Activated CD8-positive, alpha-beta T cell treated with anti-CD3 and anti-CD28 coated beads for 36 hours (primary cell): ENCODE measurements at regions of chr12 and their contacts with region 1.

Region 1: GRCh38 chr12:1939801-1940607 is 21.6 kb upstream of the CACNA2D4 start:
- DNase-seq: peak; percentile 92
- ATAC-seq: peak; percentile 96
- H3K4me3 Mint-ChIP-seq: no peak overlapping the region
- H3K27ac Mint-ChIP-seq: no peak overlapping the region
- H3K4me1 Mint-ChIP-seq: peaks cover 4% of the 10 kb centered on the region
- H3K27me3 Mint-ChIP-seq: no peaks in the 10 kb centered on the region
- CTCF ChIP-seq: peak; percentile 91

Region 2: GRCh38 chr12:1634590-1635191 is 305.3 kb before region 1 on chr12:
- CTCF ChIA-PET with region 1: interaction called, 34 read pairs
- POLR2A ChIA-PET with region 1: interaction called, 4 read pairs
- intact Hi-C with region 1: loop called (anchors 5 kb)
- DNase-seq: peak; percentile 72
- ATAC-seq: peak; percentile 75
- H3K4me3 Mint-ChIP-seq: no peak overlapping the region
- H3K27ac Mint-ChIP-seq: no peak overlapping the region
- H3K4me1 Mint-ChIP-seq: peaks cover 10% of the 10 kb centered on the region
- H3K27me3 Mint-ChIP-seq: peaks cover 43% of the 10 kb centered on the region
- CTCF ChIP-seq: peak; percentile 81

Region 3: DNA sequence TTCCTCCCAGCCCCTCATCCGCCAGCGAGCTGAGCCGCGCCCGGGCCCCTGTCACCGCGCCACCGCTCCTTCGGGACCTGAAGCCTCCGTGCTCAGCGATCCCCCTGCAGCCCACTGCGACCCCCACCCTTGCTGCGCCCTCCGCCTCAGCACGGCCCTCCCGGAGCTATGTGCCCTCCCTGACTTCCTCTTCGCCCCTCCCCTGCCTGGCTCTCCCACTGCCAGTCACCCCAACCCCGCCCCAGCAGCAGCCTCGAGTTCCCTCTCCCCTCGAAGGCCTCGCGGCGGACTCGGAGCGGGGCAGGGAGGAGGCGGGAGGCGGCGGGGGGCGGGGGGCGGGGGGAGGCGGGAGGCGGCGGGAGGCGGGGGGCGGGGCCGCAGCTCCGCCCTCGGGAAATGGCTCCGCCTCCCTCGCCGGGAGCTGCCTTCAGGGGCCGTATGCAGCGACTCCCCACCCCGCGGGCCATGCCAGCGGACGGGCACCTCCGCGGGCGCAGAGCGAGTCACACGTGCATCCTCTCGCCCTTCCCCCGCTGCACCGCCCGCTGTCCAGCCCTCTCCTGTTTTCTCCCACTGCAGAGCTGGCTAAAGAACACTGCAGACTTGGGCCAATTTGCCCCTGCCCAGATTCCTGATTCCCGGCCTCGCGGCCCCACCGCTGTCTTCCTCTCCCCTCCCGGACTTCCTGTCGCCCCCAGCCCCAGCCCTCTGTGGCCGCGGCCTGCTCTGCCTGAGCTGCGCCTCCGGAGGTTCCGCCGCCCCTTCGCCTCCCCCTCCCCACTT is 278.3 kb before region 1 on chr12:
- CTCF ChIA-PET with region 1: interaction called, 53 read pairs
- POLR2A ChIA-PET with region 1: no interaction called
- intact Hi-C with region 1: loop called (anchors 5 kb)
- DNase-seq: peak; percentile 91
- ATAC-seq: peak; percentile 93
- H3K4me3 Mint-ChIP-seq: peak overlapping the region; percentile 73
- H3K27ac Mint-ChIP-seq: peak overlapping the region; percentile 83
- H3K4me1 Mint-ChIP-seq: peaks cover 36% of the 10 kb centered on the region
- H3K27me3 Mint-ChIP-seq: no peaks in the 10 kb centered on the region
- CTCF ChIP-seq: no peak

Region 4: DNA sequence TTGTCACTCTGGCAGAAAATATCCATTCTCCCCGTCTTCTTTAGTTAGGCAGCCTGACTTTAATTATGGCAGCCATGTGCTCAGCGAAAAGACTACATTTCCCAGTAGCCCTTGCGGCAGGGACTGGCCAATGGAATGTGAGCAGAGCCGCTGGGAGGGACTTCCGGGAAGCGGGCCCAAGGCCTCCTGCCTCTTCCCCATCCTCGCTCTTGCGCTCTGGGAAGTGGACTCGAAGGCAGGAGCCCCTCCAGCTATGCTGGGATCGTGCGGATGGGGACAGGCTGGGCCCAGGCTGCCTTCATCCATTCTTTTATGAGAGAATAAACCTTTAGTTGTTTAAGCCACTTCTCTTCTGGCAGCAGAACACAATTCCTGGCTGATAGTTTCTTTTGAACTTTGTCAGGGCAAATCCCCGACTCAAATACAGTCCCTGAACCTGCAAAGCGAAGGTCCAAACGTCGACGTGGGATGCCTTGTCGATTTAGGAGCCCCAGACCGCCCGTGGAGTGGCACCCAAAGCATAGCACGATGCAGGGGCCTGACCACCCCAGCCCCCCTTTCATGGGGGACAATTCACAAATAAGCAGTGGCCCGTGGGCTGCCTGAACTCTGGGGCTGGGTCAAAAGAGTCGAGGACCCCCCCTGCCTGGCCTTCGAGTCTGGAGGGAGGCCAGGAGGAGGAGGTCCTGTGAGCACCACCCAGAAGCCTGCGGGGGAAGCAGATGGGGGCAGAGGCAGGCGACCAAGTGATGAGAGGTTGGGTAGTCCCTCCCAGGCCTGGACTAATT is 135.3 kb before region 1 on chr12:
- CTCF ChIA-PET with region 1: interaction called, 29 read pairs
- POLR2A ChIA-PET with region 1: interaction called, 4 read pairs
- intact Hi-C with region 1: no loop called
- DNase-seq: peak; percentile 93
- ATAC-seq: peak; percentile 97
- H3K4me3 Mint-ChIP-seq: no peak overlapping the region
- H3K27ac Mint-ChIP-seq: peak overlapping the region; percentile 78
- H3K4me1 Mint-ChIP-seq: peaks cover 9% of the 10 kb centered on the region
- H3K27me3 Mint-ChIP-seq: no peaks in the 10 kb centered on the region
- CTCF ChIP-seq: no peak

Region 5: GRCh38 chr12:1896964-1897363 is 43.0 kb before region 1 on chr12:
- CTCF ChIA-PET with region 1: interaction called, 10 read pairs
- POLR2A ChIA-PET with region 1: no interaction called
- intact Hi-C with region 1: no loop called
- DNase-seq: no peak
- ATAC-seq: no peak
- H3K4me3 Mint-ChIP-seq: no peak overlapping the region
- H3K27ac Mint-ChIP-seq: no peak overlapping the region
- H3K4me1 Mint-ChIP-seq: no peaks in the 10 kb centered on the region
- H3K27me3 Mint-ChIP-seq: peaks cover 14% of the 10 kb centered on the region
- CTCF ChIP-seq: no peak

Region 6: GRCh38 chr12:1927751-1928351 is 12.2 kb before region 1 on chr12:
- CTCF ChIA-PET with region 1: interaction called, 23 read pairs
- POLR2A ChIA-PET with region 1: no interaction called
- intact Hi-C with region 1: no loop called
- DNase-seq: no peak
- ATAC-seq: no peak
- H3K4me3 Mint-ChIP-seq: no peak overlapping the region
- H3K27ac Mint-ChIP-seq: no peak overlapping the region
- H3K4me1 Mint-ChIP-seq: peaks cover 15% of the 10 kb centered on the region
- H3K27me3 Mint-ChIP-seq: peaks cover 2% of the 10 kb centered on the region
- CTCF ChIP-seq: no peak

Region 7: GRCh38 chr12:1962051-1963020 is 22.3 kb after region 1 on chr12:
- CTCF ChIA-PET with region 1: interaction called, 14 read pairs
- POLR2A ChIA-PET with region 1: no interaction called
- intact Hi-C with region 1: no loop called
- DNase-seq: no peak
- ATAC-seq: no peak
- H3K4me3 Mint-ChIP-seq: no peak overlapping the region
- H3K27ac Mint-ChIP-seq: no peak overlapping the region
- H3K4me1 Mint-ChIP-seq: peaks cover 4% of the 10 kb centered on the region
- H3K27me3 Mint-ChIP-seq: no peaks in the 10 kb centered on the region
- CTCF ChIP-seq: no peak